ENCODE measurements at regions of chr10 and their contacts with region 1.

Region 1: GRCh38 chr10:43689955-43690771 is 41.5 kb upstream of the ZNF32 start:
- DNase-seq: peak; percentile 95
- CTCF ChIP-seq: peak; percentile 99

Region 2: GRCh38 chr10:44030143-44030542 is 340.0 kb after region 1 on chr10:
- in situ Hi-C with region 1: loop called (anchors 25 kb)
- DNase-seq: peak; percentile 60
- CTCF ChIP-seq: peak; percentile 74